SK-MEL-5 (cell line): ENCODE measurements at regions of chr17 and their contacts with region 1.

Region 1: GRCh38 chr17:79045842-79046196 is 21.9 kb downstream of the C1QTNF1 start:
- DNase-seq: peak; percentile 89

Region 2: DNA sequence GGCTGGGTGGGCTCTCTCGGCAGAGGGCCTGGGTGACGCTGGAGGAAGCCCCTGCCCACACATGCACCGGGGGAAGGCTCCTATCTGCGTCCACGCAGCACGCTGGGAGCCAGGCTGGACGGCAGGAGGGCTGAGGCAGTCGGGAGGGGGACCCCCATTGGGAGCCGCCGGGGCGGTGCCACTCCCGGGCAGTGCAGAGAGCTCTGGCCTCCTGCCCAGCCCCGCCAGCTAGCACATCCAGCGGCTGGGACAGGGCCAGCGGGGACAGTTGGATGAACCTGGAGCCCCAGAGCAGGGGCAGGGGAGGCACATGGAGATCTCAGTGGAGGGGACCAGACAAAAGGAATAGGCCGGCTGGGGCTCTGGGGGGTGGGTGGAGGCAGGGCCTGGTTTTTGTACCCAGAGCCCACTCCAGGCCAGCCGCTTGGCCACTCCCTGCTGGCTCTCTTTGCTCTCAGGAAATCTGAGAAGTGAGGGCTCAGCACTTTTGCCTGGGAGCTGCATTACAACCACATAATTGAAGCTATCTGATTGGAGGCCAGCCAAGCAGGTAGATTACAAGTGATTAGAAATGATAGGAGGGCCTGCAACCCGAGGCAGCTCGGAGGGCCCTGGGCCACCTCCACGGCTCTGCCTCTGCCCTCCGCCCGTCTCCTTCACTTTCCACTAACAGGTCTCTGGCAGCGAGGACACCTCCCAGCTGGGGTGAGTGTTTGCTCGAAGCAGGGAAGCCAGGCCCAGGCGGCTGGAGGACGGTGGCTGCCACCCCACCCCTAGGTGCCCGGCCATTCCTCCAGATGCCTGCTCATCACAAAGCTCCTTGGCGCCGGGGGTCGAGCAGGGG is 68.9 kb after region 1 on chr17:
- in situ Hi-C with region 1: no loop called
- DNase-seq: no peak

Region 3: DNA sequence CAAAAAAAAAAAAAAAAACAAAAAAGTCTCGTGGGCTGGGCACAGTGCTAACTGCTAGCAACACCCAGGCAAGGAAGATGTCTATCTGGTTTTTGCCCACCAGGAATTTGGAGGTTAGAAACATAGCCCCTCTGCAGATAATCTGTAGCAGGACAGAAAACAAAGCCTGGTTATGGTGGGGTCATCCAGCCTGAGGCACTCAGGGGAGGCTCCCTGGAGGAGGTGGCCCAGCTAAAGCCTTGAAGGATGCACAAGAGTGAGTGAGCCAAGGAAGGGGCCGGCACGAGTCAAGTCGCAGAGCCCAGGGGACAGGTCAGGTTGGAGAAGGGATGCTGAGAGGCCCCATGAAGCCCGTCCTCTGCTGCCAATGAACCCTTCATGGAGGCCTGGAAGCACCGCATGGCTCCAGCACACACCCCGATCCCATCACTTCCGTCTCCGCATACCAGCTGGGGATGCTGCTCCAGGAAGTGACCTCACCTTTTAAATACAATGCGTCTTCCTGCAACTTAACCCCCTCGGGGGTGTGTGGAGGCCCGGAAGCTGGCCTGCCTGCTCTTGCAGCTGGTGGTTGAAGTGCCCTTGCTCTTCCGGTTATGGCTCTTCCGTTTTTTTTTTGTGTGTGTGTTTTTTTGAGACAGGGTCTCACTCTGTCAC is 115.3 kb after region 1 on chr17:
- in situ Hi-C with region 1: no loop called
- DNase-seq: no peak

Region 4: DNA sequence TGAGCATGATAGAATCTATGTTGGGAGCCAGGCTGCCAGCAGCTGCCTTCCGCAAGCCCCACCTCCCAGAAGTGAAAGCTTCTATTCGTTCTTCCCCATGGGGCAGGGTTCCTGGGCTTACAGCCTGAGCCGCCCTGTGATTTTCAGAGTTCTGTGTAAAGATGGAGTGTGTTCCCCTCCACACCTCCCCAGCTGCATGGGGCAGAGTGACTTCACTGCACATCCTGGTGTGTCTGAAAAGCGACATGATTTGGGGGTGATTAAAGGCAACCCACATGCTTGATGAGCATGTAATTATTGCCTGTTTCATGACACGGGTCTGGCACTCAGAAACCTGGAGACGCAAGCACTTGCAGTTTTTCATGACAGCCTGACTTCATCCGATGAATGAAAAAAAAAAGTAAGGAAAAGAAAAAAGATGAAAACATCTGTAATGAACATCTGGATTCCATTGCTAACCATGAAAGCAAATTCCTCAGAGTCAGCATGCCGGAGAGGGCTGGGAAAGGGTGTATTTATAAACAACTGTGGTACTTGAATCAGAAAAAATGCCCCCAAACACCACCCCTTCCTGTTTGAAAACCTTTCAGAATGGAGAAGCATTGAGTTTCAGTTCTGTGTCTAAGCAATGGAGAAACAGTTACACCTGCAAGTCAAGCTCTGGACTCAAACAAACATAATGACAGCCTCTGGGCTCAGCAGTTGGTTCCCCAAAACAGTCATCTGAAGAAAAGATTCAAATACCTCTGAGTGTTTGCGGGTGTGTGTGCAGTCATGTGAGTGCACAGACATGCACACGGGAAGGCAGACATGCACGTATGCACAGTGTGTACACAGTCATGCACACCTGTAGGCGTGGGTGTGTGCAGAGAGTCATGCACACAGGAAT is 294.8 kb after region 1 on chr17:
- in situ Hi-C with region 1: no loop called
- DNase-seq: no peak

Region 5: GRCh38 chr17:79393358-79394202 is 347.8 kb after region 1 on chr17:
- in situ Hi-C with region 1: loop called (anchors 10 kb)
- DNase-seq: peak; percentile 95